ENCODE measurements at regions of chr16 and their contacts with region 1.

Region 1: DNA sequence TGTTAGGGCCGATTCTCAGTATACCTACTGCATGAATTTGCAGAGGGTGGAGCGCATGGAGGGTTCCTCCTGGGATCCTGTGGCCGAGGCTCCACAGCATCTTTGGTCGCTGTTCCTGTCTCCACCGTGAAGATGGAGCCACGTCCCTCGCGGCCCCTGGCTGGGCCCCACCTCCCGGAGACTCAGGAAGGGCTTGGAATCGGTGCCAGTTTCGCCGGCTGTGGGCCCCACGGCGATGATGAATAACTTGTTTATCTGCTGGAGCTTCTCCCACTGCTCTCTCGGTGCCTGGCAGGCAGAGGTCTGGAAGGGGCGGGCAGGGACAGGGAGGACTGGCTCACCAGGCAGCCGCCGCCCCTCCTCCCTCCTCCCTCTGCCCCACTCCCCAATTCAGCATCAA is 8.1 kb downstream of the SLC5A11 start:
- DNase-seq: peak; percentile 44 to 94 (median 88)
- H3K4me3 ChIP-seq: peak overlapping the region in 55 of 59 donors; percentile 5 to 56 (median 34)
- H3K27ac ChIP-seq: peak overlapping the region in 58 of 59 donors; percentile 77 to 99 (median 96)
- H3K27me3 ChIP-seq: no peaks in the 10 kb centered on the region
- CTCF ChIP-seq: peak in 2 of 56 donors; percentile 17 to 22

Region 2: DNA sequence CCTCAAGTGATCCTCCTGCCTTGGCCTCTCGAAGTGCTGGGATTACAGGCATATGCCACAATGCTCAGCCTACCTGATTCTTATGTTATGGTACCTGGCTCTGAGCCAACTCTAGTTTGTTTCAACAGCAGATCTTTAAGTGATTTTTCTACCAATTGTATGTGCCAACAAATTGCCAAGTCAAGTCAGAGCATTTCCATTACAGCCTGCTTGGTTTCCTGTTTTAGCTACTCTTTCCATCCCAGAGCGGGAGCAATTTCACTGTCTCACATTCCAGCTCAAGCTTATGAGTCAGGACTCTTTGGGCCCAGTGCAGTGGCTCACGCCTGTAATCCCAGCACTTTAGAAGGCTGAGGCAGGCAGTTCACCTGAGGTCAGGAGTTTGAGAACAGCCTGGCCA is 345.2 kb before region 1 on chr16:
- intact Hi-C with region 1: no loop called
- DNase-seq: no peak
- H3K4me3 ChIP-seq: no peak overlapping the region
- H3K27ac ChIP-seq: no peak overlapping the region
- H3K27me3 ChIP-seq: peaks cover 0 to 4% (median 0%) of the 10 kb centered on the region in 45 donors
- CTCF ChIP-seq: no peak

Region 3: DNA sequence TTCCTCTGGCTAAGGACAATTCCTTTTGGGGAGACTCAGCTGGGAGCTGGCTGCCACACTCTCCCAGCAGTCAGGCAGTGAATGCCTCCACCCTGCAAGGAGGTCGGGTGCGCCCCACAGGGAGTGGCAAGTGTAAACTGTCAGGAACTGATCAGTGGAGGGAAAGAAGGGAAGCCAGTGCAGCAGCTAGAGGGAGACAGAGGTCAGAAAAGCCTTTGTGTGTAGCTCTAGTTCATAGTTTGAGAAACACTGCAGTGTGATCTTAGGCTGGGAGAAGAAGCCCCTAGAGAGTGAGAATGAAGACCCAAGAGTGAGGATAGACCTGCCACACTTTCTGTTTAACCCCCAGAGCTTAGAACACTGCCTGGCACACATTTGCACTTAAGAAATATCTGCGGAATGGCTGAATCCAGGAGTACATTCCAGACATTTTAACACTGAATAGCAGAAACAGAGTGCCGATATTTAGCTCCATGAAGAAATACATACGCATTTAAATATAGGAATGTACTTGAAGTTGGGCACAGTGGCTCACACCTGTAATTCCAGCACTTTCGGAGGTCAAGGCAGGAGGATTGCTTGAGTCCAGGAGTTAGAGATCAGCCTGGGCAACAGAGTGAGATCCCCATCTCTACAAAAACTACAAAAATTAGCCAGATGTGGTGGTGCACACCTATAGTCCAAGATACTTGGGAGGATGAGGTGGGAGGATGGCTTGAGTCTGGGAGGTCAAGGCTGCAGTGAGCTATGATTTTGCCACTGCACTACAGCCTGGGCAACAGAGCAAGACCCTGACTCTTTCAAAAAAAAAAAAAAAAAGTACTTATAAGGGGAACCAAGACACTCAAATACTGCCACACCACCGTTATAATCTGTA is 19.1 kb before region 1 on chr16:
- intact Hi-C with region 1: loop called in 1 of 2 experiments (anchors 2 kb)
- DNase-seq: peak in 5 of 10 donors; percentile 43 to 74 (median 58)
- H3K4me3 ChIP-seq: no peak overlapping the region
- H3K27ac ChIP-seq: peak overlapping the region in 38 of 59 donors; percentile 4 to 96 (median 49)
- H3K27me3 ChIP-seq: no peaks in the 10 kb centered on the region
- CTCF ChIP-seq: peak; percentile 15 to 86 (median 66)

Region 4: GRCh38 chr16:24955982-24956731 is 102.3 kb after region 1 on chr16:
- intact Hi-C with region 1: no loop called
- DNase-seq: no peak
- H3K4me3 ChIP-seq: no peak overlapping the region
- H3K27ac ChIP-seq: peak overlapping the region in 1 of 59 donors; percentile 7
- H3K27me3 ChIP-seq: no peaks in the 10 kb centered on the region
- CTCF ChIP-seq: no peak